Activated T-helper 2 cell treated with anti-CD3 and anti-CD28 coated beads, Interferon-gamma antibody, Interleukin-2, Interleukin-4, amounts not matched to agents 10 μg/mL and 5 μg/mL and 100 μg/mL, durations not matched to agents 14 hours and 24 hours and 36 hours (primary cell): ENCODE measurements at regions of chr6 and their contacts with region 1.

Region 1: GRCh38 chr6:47413752-47414422 is 63.7 kb upstream of the CD2AP start:
- DNase-seq: peak; percentile 24
- H3K4me3 Mint-ChIP-seq: peak overlapping the region; percentile 70
- H3K27ac Mint-ChIP-seq: no peak overlapping the region
- H3K4me1 Mint-ChIP-seq: peaks cover 14% of the 10 kb centered on the region
- H3K27me3 Mint-ChIP-seq: peaks cover 26% of the 10 kb centered on the region

Region 2: DNA sequence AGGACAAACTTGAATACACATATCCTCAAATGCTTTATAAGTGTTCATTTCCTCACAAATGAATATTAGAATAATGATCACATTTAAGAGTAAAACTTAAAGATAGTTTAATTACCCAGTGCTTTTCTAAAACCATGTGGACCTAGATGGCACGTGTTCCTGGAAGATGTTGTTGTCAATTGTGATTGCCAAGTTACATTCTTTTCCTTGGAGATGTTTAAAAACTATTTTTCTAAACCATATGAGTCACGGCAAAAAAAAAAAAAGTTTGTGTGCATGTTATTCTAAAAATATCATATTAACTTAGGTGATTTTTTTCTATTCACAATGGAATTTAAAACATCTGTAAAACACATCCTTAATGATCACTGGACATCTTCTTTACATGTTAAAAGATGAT is 973.7 kb before region 1 on chr6:
- intact Hi-C with region 1: no loop called
- DNase-seq: no peak
- H3K4me3 Mint-ChIP-seq: no peak overlapping the region
- H3K27ac Mint-ChIP-seq: no peak overlapping the region
- H3K4me1 Mint-ChIP-seq: no peaks in the 10 kb centered on the region
- H3K27me3 Mint-ChIP-seq: peaks cover 6% of the 10 kb centered on the region

Region 3: GRCh38 chr6:47344022-47344421 is 69.9 kb before region 1 on chr6:
- intact Hi-C with region 1: no loop called
- DNase-seq: no peak
- H3K4me3 Mint-ChIP-seq: no peak overlapping the region
- H3K27ac Mint-ChIP-seq: no peak overlapping the region
- H3K4me1 Mint-ChIP-seq: no peaks in the 10 kb centered on the region
- H3K27me3 Mint-ChIP-seq: peaks cover 2% of the 10 kb centered on the region

Region 4: GRCh38 chr6:47464052-47464451 is 50.2 kb after region 1 on chr6:
- intact Hi-C with region 1: no loop called
- DNase-seq: no peak
- H3K4me3 Mint-ChIP-seq: no peak overlapping the region
- H3K27ac Mint-ChIP-seq: no peak overlapping the region
- H3K4me1 Mint-ChIP-seq: no peaks in the 10 kb centered on the region
- H3K27me3 Mint-ChIP-seq: peaks cover 25% of the 10 kb centered on the region

Region 5: DNA sequence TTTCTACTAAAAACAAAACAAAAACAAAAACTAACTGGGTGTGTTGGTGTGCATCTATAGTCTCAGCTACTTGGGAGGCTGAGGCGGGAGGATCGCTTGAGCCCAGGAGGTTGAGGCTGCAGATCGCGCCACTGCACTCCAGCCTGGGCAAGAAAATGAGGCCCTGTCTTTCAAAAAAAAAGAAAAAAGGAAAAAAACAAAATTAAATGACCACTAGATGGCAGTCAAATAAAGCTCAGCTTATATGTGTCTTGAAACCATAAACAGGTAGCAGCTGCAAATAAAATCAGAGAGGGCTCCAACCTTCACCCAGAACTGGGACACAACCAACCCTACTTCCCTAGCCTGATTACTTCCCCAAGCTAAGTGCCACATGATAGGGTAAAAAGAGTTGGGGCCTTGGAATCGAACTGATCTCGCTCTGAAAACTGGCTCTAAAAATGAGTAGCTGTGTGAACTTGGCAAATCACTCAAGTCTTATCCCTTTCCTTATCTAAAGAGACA is 217.4 kb after region 1 on chr6:
- intact Hi-C with region 1: loop called (anchors 1 kb)
- DNase-seq: no peak
- H3K4me3 Mint-ChIP-seq: no peak overlapping the region
- H3K27ac Mint-ChIP-seq: no peak overlapping the region
- H3K4me1 Mint-ChIP-seq: peaks cover 8% of the 10 kb centered on the region
- H3K27me3 Mint-ChIP-seq: peaks cover 2% of the 10 kb centered on the region

Region 6: DNA sequence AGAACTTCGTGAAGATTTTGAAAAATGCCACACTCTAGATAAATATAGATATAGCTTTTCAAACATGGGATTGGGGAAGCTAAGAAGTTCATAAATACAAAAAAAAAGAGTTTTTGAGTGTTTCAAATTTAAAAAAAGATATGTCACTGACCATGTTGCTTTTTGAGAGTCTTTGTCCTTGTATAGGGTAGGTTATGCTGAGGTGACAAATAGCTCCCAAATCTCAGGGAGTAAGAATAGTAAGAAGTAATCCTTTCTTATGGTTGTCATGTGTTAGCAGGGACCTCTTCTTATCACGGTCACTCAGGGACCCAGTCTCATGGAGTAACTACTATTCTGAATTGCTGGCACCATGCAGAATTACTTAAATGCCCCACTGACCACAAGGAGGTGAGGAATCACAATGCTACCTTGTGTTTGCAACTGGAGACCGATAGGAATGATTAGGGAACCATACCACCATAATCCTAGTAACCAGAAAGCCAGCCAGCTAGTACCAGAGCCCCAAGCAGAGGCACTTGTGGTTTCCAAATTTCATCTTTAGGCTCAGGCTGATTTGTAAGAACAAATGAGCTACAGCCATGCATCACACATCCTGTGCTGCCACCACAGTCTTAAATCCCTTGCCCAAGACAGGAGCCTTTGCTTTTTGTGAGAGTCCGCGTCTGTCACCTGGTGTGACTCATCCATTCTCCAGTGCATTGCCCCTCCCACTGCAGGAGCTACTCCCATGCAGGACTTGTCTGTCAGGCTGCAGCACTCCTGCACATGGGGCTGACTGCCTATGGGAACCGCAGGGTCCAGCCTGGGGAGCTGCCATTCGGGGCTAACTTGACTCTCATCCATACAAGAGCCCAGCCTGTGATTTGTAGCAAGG is 242.1 kb after region 1 on chr6:
- intact Hi-C with region 1: loop called (anchors 1 kb)
- DNase-seq: peak; percentile 33
- H3K4me3 Mint-ChIP-seq: no peak overlapping the region
- H3K27ac Mint-ChIP-seq: no peak overlapping the region
- H3K4me1 Mint-ChIP-seq: peaks cover 5% of the 10 kb centered on the region
- H3K27me3 Mint-ChIP-seq: peaks cover 15% of the 10 kb centered on the region

Region 7: GRCh38 chr6:47733879-47734558 is 320.1 kb after region 1 on chr6:
- intact Hi-C with region 1: loop called (anchors 1 kb)
- DNase-seq: no peak
- H3K4me3 Mint-ChIP-seq: no peak overlapping the region
- H3K27ac Mint-ChIP-seq: no peak overlapping the region
- H3K4me1 Mint-ChIP-seq: no peaks in the 10 kb centered on the region
- H3K27me3 Mint-ChIP-seq: peaks cover 22% of the 10 kb centered on the region

Region 8: GRCh38 chr6:47780510-47781356 is 366.8 kb after region 1 on chr6:
- intact Hi-C with region 1: loop called (anchors 1 kb)
- DNase-seq: peak; percentile 16
- H3K4me3 Mint-ChIP-seq: no peak overlapping the region
- H3K27ac Mint-ChIP-seq: no peak overlapping the region
- H3K4me1 Mint-ChIP-seq: peaks cover 2% of the 10 kb centered on the region
- H3K27me3 Mint-ChIP-seq: peaks cover 31% of the 10 kb centered on the region